ENCODE measurements at regions of chr15 and their contacts with region 1.

Region 1: DNA sequence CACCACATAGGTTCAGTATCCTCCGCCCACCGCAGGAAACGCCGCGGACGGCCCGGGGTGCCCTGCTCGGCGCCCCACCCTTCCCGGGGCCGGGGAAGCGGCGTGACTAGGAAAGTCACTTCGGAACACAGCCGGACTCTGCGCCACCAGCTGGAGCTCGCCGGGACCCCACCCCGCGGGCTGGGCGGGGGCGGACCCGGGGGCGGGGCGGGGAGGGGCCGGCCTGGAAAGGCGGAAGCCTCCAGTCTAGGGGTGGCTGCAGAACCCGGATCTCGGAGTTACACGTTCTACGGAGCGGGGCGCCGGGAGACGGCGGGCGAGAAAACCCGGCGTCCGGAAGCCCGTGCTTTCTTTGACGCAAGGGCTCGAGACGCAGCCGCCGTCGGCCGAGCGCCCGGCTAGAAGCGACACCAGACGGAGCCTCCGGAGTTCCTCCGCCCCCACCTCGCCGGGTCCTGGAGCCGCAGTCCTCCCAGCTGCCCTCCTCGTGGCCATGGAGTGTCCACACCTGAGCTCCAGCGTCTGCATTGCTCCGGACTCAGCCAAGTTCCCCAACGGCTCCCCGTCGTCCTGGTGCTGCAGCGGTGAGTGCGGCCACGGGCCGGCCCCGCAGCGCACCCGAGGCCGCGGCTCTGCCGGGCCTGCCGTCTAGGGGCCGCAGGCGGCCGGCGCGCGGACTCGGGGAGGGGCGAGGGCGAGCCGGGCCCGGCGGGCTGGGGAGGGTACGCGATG is at the start of gene USP3:
- DNase-seq: peak; percentile 94
- H3K4me3 Mint-ChIP-seq: peak within 1 kb of the TSS; percentile 94
- H3K27ac Mint-ChIP-seq: peak within 1 kb of the TSS; percentile 95
- H3K4me1 Mint-ChIP-seq: peaks cover 82% of the 10 kb centered on the region
- H3K27me3 Mint-ChIP-seq: no peaks in the 10 kb centered on the region
- total RNA-seq, gene USP3: 67.9 to 68.7 TPM

Region 2: DNA sequence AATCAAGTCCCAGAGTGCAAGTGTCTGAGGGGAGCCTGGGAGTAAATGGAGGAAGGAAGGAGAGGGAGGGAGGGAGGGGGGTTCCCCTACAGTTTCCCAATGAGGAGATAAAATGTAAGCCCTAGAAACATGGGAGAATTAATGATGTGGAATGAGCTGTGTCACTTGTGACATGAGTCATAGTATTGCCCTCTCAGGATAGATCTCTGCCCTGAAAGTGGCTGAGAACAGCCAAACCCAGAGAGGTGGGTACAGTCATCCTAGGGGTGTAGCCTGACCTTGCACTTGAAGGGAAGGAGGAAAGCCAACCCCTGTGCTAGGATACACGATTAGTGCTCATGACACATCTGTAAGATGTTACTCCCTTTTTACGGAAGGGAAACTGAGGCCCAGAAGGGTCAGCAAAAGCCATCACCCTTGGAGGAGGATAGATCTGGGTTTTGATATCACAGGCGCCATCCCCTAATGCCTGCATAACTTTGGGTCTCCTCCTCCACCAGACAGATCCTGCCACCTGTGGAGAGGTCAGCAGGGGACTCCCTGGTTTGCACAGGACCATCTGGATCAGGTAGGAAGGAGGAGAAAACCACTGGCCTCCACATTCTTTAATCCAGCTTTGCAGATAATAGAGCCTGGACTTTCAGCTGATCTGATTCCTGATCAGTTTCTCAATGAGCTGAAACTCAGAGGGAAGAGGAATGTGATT is 23.2 kb before region 1 on chr15:
- CTCF ChIA-PET with region 1: interaction called, 40 read pairs
- POLR2A ChIA-PET with region 1: interaction called, 175 read pairs
- DNase-seq: no peak
- H3K4me3 Mint-ChIP-seq: no peak overlapping the region
- H3K27ac Mint-ChIP-seq: no peak overlapping the region
- H3K4me1 Mint-ChIP-seq: peaks cover 67% of the 10 kb centered on the region
- H3K27me3 Mint-ChIP-seq: no peaks in the 10 kb centered on the region

Region 3: DNA sequence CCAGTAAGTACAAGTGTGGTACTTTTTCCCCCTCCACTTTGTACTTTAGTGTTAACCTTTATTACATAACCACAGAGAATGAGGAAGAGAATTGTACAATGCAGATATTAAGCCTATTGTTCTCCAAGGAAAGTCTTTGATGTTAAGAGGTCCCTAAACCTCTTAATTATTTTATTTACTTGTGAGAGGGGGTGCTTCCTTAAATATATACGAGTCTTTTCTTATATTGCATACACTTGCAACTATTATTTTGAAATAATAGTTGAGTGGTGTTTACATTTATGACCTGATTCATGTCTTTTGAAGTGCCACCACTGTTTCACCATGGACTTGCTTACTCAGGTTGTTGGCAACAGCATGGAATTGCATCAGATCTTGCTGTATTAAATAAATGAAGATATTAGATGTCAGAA is 10.1 kb after region 1 on chr15:
- CTCF ChIA-PET with region 1: interaction called, 11 read pairs
- POLR2A ChIA-PET with region 1: interaction called, 10 read pairs
- DNase-seq: no peak
- H3K4me3 Mint-ChIP-seq: no peak overlapping the region
- H3K27ac Mint-ChIP-seq: no peak overlapping the region
- H3K4me1 Mint-ChIP-seq: peaks cover 66% of the 10 kb centered on the region
- H3K27me3 Mint-ChIP-seq: no peaks in the 10 kb centered on the region

Region 4: GRCh38 chr15:63593705-63594671 is 89.6 kb after region 1 on chr15:
- CTCF ChIA-PET with region 1: interaction called, 19 read pairs
- POLR2A ChIA-PET with region 1: interaction called, 54 read pairs
- DNase-seq: no peak
- H3K4me3 Mint-ChIP-seq: no peak overlapping the region
- H3K27ac Mint-ChIP-seq: peak overlapping the region; percentile 18
- H3K4me1 Mint-ChIP-seq: peaks cover 58% of the 10 kb centered on the region
- H3K27me3 Mint-ChIP-seq: no peaks in the 10 kb centered on the region